ENCODE measurements at regions of chr20 and their contacts with region 1.

Region 1: GRCh38 chr20:62357187-62357667 is 9.9 kb downstream of the LAMA5 start:
- DNase-seq: peak; percentile 84
- H3K4me3 ChIP-seq: no peak overlapping the region
- H3K27ac ChIP-seq: peak overlapping the region; percentile 89
- H3K4me1 ChIP-seq: peaks cover 52% of the 10 kb centered on the region
- H3K27me3 ChIP-seq: no peaks in the 10 kb centered on the region
- CTCF ChIP-seq: no peak
- POLR2A ChIP-seq: peak; percentile 49

Region 2: DNA sequence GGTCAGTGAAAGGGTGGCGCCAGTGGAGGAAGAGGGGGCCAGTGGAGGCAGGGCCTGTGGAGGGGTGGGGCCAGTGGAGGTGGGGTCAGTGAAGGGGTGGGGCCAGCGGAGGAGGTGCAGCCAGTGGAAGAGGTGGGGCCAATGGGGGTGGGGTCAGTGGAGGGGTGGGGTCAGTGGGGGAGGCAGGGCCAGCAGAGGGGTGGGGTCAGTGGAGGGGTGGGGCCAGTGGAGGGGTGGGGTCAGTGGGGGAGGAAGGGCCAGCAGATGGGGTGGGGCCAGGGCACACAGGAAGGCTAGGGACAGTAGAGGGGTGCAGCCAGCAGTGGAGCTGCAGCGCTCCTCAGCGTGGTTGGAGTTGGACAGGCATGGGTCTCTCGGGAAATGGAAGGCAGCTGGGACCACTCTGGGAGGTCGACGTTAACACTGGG is 35.7 kb before region 1 on chr20:
- CTCF ChIA-PET with region 1: no interaction called
- POLR2A ChIA-PET with region 1: no interaction called
- dilution Hi-C with region 1: no loop called
- intact Hi-C with region 1: loop called (anchors 5 kb)
- DNase-seq: no peak
- H3K4me3 ChIP-seq: no peak overlapping the region
- H3K27ac ChIP-seq: no peak overlapping the region
- H3K4me1 ChIP-seq: no peaks in the 10 kb centered on the region
- H3K27me3 ChIP-seq: no peaks in the 10 kb centered on the region
- CTCF ChIP-seq: no peak
- POLR2A ChIP-seq: no peak

Region 3: GRCh38 chr20:62368976-62369814 is 12.0 kb after region 1 on chr20:
- CTCF ChIA-PET with region 1: interaction called, 179 read pairs
- POLR2A ChIA-PET with region 1: no interaction called
- dilution Hi-C with region 1: no loop called
- intact Hi-C with region 1: loop called (anchors 1 kb)
- DNase-seq: peak; percentile 50
- H3K4me3 ChIP-seq: no peak overlapping the region
- H3K27ac ChIP-seq: no peak overlapping the region
- H3K4me1 ChIP-seq: peaks cover 33% of the 10 kb centered on the region
- H3K27me3 ChIP-seq: no peaks in the 10 kb centered on the region
- CTCF ChIP-seq: peak; percentile 31 to 62
- POLR2A ChIP-seq: no peak

Region 4: DNA sequence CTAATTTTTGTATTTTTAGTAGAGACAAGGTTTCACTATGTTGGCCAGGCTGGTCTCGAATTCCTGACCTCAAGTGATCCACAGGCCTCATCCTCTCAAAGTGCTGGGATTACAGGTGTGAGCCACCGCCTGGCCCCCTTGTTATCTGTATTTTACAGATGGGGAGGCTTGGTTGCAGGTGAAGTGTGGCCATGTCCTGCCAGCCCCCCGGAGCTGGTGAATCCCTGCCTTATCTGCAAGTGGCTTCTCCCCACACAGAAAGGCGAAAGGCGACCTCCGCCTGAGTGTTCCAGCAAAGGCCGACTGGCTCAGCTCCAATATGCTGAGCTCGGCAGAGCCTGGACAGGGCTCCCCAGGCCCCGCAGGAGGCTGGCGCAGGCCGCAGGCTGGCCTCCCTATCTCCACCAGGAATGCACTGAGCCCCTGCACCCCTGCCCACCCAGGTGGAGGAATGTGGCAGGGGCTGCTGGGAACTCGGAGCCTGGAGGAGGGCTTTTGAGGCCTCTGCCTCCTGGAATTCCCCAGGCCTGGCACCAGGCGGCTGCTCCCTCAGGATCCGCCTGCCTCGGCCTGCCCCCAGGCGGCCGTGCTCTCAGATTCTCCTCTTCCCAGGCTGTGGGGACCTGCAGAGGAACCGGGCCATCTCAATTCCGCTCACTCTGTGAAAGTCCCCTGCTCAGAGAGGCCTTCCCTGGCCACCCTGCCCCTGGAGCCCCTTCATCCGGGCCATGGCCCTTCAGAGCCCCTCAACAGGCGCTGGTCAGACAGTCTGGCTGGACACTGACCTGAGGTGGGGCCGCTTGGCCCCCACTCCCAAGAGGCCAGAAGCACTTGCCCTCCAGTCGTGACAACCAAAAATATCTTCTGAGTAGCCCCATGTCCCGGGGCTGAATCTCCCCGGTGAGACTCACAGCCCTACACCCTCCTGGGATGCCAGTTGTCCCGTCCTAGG is 19.2 kb after region 1 on chr20:
- CTCF ChIA-PET with region 1: interaction called, 179 read pairs
- POLR2A ChIA-PET with region 1: no interaction called
- dilution Hi-C with region 1: no loop called
- intact Hi-C with region 1: no loop called
- DNase-seq: no peak
- H3K4me3 ChIP-seq: no peak overlapping the region
- H3K27ac ChIP-seq: no peak overlapping the region
- H3K4me1 ChIP-seq: peaks cover 11% of the 10 kb centered on the region
- H3K27me3 ChIP-seq: no peaks in the 10 kb centered on the region
- CTCF ChIP-seq: peak; percentile 27 to 57
- POLR2A ChIP-seq: no peak

Region 5: DNA sequence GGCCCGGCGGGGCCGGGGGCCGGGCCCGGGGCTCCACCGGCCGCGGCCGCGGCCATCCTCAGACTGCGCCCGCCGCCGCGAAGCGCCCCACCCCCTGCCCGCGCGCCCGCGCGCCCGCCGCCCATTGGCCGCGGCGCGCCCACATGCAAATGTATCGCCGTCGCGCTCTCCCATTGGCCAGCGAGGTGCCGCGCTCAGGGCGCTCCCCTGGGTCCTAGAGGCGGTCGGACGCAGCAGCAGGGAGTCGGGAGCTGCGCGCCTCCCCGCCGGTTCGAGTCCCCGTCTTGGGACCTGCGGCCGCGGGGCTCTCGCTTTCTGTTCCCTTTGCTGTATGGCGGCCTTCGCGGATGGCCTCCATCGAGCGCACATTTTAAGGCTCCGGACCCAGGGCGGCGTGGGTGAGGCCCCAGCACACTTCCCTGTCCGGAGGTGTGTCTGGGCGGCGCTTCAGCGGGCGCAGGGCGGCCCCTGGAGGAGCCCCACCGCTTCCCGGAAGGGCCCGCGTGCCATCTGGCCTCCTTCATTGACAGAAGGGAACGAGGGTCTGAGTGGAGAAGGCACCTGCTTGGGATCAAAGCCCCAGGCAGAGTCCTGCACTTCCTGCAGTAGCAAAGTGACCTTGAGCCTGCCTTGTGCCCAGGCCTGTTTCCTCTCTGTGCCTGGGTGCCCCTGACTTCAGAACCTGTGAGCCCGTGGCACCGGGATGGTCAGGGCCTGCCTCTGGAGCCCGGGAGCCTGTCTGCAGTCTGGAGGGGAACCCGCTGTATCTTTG is 50.2 kb after region 1 on chr20 and contains the start of gene CABLES2:
- CTCF ChIA-PET with region 1: no interaction called
- POLR2A ChIA-PET with region 1: no interaction called
- dilution Hi-C with region 1: no loop called
- intact Hi-C with region 1: loop called (anchors 1 kb)
- DNase-seq: peak; percentile 89
- H3K4me3 ChIP-seq: peak within 1 kb of the TSS in 2 of 3 experiments; percentile 17 to 68
- H3K27ac ChIP-seq: no peak within 1 kb of the TSS
- H3K4me1 ChIP-seq: peaks cover 11% of the 10 kb centered on the region
- H3K27me3 ChIP-seq: no peaks in the 10 kb centered on the region
- CTCF ChIP-seq: no peak
- POLR2A ChIP-seq: no peak
- total RNA-seq, gene CABLES2: 9.9 TPM in 2 replicates

Region 6: DNA sequence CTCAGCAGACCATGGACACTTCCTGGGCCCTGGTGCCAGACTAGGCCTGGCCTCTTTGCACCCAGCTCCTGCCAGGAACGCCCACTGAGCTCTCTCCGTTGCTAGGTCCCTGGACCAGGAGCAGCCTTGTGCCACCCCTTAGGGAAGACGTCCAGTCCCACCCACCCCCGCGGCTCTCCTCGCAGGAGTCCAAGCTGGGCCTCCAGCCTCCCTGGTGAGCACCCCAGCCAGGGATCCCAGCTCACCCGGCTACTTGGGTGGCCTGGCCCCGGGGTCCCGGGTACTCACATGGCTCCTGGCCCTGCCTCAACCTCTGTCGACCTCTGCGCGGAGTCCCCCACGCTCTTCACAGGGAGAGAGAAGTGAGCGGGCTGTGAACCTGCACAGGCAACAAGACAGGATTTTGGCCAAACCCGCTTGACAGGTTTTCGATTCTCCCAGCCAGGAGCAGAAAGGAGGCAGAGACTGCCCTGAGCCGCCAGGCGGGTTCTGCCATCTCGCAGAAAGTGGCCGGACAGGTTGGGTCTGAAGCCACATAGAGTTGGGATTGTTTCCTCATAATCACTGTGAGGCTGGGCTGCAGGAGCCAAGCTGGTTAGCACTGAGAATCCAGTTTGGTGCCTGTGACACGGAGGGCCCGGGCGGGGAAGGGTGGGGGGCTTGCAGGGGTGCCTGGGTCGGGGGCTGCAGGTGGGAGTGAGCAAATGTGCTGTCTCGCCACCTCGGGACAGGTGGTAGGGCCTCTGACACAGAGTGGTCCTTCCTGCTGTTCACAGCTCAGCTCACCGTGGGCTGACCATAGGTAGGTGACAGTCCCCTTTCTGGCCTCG is 70.2 kb after region 1 on chr20 and contains the start of gene RBBP8NL:
- CTCF ChIA-PET with region 1: no interaction called
- POLR2A ChIA-PET with region 1: no interaction called
- dilution Hi-C with region 1: no loop called
- intact Hi-C with region 1: no loop called
- DNase-seq: no peak
- H3K4me3 ChIP-seq: no peak within 1 kb of the TSS
- H3K27ac ChIP-seq: no peak within 1 kb of the TSS
- H3K4me1 ChIP-seq: no peaks in the 10 kb centered on the region
- H3K27me3 ChIP-seq: peaks cover 0 to under 1% of the 10 kb centered on the region in 2 experiments
- CTCF ChIP-seq: no peak
- POLR2A ChIP-seq: no peak
- total RNA-seq, gene RBBP8NL: not detected in 2 replicates

Measured in endothelial cell of umbilical vein (primary cell).